Stomach (tissue), 19 donors: ENCODE measurements at regions of chr4 and their contacts with region 1.

Region 1: DNA sequence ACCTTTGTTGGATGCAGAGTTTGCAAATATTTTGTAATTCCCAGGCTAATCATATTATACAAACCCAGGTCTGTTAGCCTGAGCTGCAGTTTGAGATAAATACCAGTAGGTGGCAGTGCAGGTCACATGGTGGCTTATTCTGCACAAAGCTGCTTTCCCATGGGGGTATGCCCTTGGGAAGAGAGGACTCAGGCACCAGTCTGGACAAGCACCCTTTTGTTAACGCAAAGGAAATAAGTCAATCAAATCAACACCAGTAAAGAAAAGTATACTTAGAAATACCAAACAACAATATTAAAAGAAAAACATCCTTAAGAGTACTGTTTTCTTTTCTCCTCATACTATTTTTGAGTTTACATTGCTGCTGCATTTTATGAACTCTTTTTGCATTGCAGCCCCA is 389.0 kb upstream of the ZFP42 start:
- DNase-seq: peak in 1 of 2 donors; percentile 72
- H3K4me3 ChIP-seq: no peak overlapping the region
- H3K27ac ChIP-seq: no peak overlapping the region
- H3K4me1 ChIP-seq: no peaks in the 10 kb centered on the region
- H3K27me3 ChIP-seq: no peaks in the 10 kb centered on the region
- CTCF ChIP-seq: peak in 5 of 7 experiments; percentile 52 to 82 (median 76)
- EP300 ChIP-seq: no peak
- POLR2A ChIP-seq: no peak

Region 2: GRCh38 chr4:186514271-186514950 is 1092.2 kb before region 1 on chr4:
- intact Hi-C with region 1: no loop called
- DNase-seq: no peak
- H3K4me3 ChIP-seq: no peak overlapping the region
- H3K27ac ChIP-seq: no peak overlapping the region
- H3K4me1 ChIP-seq: no peaks in the 10 kb centered on the region
- H3K27me3 ChIP-seq: no peaks in the 10 kb centered on the region
- CTCF ChIP-seq: no peak
- EP300 ChIP-seq: no peak
- POLR2A ChIP-seq: no peak

Region 3: GRCh38 chr4:187071946-187072600 is 534.5 kb before region 1 on chr4:
- intact Hi-C with region 1: no loop called
- DNase-seq: peak in 1 of 2 donors; percentile 41
- H3K4me3 ChIP-seq: no peak overlapping the region
- H3K27ac ChIP-seq: no peak overlapping the region
- H3K4me1 ChIP-seq: peaks cover 0 to 3% (median 0%) of the 10 kb centered on the region in 4 donors
- H3K27me3 ChIP-seq: no peaks in the 10 kb centered on the region
- CTCF ChIP-seq: no peak
- EP300 ChIP-seq: no peak
- POLR2A ChIP-seq: no peak

Region 4: DNA sequence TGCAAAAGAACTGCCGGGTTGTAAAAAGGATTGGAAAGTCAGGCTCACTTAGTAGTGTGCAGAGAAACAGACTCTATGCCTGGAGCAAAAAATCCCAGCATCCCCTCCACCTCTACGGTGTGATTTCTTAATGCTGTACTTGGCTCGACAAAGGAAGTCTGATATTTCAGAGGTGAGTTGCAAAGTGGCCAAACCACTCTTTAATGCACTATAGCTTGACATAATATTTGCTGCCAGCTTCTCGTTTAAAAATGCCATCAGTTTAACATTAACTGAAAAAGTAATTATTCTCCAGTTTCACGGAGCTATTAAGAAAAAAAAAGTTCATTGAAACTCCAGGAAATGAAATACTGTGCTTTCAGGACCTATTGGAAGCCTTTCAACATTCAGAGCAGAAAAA is 59.3 kb before region 1 on chr4:
- intact Hi-C with region 1: no loop called
- DNase-seq: peak in 1 of 2 donors; percentile 36
- H3K4me3 ChIP-seq: no peak overlapping the region
- H3K27ac ChIP-seq: no peak overlapping the region
- H3K4me1 ChIP-seq: no peaks in the 10 kb centered on the region
- H3K27me3 ChIP-seq: no peaks in the 10 kb centered on the region
- CTCF ChIP-seq: no peak
- EP300 ChIP-seq: no peak
- POLR2A ChIP-seq: no peak

Region 5: DNA sequence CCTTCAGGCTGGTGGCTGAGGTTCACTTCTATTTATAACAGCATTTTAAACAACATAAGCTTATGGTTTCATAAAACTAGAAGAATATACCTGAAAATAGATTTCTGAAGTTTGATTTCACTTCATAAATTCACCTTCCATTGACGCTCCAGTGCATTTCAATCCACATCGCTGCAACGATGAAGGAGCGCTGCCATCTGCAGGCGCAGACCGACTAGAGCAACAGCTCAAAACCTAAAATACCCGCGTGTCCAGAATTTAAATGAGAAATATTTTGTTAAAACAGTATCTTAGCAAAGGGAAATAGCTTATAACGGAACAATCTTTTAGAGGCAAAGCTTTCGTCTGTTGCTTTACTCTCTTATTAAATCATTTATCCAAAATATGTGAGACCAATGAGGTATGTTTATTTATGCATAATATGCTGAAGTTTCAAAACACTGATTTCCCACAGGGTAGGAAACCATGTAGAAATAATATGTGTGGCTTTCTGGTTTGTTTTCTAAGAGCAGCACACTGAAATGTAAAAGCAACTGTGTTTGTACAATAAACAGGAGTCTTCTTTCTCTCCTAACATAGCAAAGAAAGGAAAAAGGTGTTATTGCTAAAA is 1517.7 kb after region 1 on chr4:
- intact Hi-C with region 1: loop called (anchors 10 kb)
- DNase-seq: peak; percentile 37 to 71
- H3K4me3 ChIP-seq: no peak overlapping the region
- H3K27ac ChIP-seq: no peak overlapping the region
- H3K4me1 ChIP-seq: peaks cover 0 to 3% (median 0%) of the 10 kb centered on the region in 4 donors
- H3K27me3 ChIP-seq: no peaks in the 10 kb centered on the region
- CTCF ChIP-seq: peak in 5 of 7 experiments; percentile 12 to 44 (median 34)
- EP300 ChIP-seq: no peak
- POLR2A ChIP-seq: no peak